Mucosa of descending colon (tissue), 3 donors: ENCODE measurements at regions of chr15 and their contacts with region 1.

Region 1: DNA sequence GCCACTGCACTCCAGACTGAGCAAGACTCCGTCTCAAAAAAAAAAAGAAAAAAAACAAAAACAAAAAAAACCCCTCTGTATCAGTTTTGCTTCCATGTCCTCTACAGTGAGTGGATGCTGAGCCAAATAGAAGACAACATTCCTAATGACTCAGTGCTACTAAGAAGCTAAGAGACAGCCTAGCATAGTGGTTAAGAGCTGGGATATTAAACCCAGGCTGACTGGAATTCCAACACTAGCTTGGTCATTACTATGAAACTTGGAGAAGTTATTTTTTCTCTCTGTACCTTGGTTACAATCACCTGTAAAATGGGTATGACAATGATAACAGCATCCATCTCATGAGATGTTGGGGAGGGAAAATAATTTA is 60.9 kb upstream of the PYGO1 start:
- DNase-seq: no peak
- ATAC-seq: no peak
- H3K4me3 ChIP-seq: no peak overlapping the region
- H3K4me1 ChIP-seq: no peaks in the 10 kb centered on the region
- CTCF ChIP-seq: no peak

Region 2: GRCh38 chr15:55526559-55527036 is 122.4 kb before region 1 on chr15:
- intact Hi-C with region 1: loop called in 1 of 2 experiments (anchors 5 kb)
- DNase-seq: peak in 1 of 3 donors; percentile 12
- ATAC-seq: peak; percentile 81
- H3K4me3 ChIP-seq: no peak overlapping the region
- H3K4me1 ChIP-seq: no peaks in the 10 kb centered on the region
- CTCF ChIP-seq: no peak

Region 3: GRCh38 chr15:55834331-55834730 is 185.3 kb after region 1 on chr15:
- intact Hi-C with region 1: no loop called
- DNase-seq: no peak
- ATAC-seq: no peak
- H3K4me3 ChIP-seq: no peak overlapping the region
- H3K4me1 ChIP-seq: no peaks in the 10 kb centered on the region
- CTCF ChIP-seq: no peak

Region 4: DNA sequence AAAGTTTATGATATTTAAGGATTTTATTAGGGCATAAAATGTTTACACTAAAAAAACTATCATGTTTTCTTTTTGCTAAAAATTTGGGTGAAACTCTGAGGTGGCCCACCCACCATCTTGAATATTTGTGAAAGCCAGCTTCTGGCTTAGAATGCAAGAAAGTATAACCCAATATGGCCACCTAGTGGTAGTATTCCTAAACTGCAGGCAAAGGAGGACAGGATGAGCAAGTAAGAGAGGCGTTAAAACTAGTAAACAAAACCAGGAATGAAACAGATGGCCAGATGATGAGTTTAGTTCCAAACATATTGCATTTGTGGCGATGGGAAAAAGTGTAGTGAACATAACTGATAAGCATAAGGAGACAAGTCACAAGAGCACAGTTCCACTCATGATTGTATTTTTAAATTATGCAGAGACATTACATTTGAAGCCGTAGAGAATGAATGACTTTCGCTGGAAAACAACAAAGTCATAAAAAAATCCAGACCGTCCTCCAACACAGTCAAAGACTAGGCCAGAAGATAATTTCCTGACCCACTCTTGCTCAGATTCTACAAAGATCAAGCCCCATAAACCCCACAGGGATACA is 197.2 kb after region 1 on chr15:
- intact Hi-C with region 1: loop called (anchors 5 kb)
- DNase-seq: peak in 1 of 3 donors; percentile 83
- ATAC-seq: peak; percentile 73
- H3K4me3 ChIP-seq: no peak overlapping the region
- H3K4me1 ChIP-seq: no peaks in the 10 kb centered on the region
- CTCF ChIP-seq: peak; percentile 77